ENCODE measurements at regions of chr13 and their contacts with region 1.

Region 1: GRCh38 chr13:30465585-30466357 is at the start of gene HMGB1:
- DNase-seq: peak; percentile 98 to 99 (median 99)
- ATAC-seq: peak; percentile 96 to 99 (median 98)
- H3K4me3 ChIP-seq: peak within 1 kb of the TSS; percentile 70 to 99 (median 94)
- H3K27ac ChIP-seq: peak within 1 kb of the TSS; percentile 98 to 100 (median 100)
- H3K4me1 ChIP-seq: peaks cover 2 to 39% (median 29%) of the 10 kb centered on the region in 12 donors
- H3K27me3 ChIP-seq: no peaks in the 10 kb centered on the region
- CTCF ChIP-seq: no peak
- POLR2A ChIP-seq: peak; percentile 94 to 98
- total RNA-seq, gene HMGB1: 137 to 215 (median 164) TPM

Region 2: DNA sequence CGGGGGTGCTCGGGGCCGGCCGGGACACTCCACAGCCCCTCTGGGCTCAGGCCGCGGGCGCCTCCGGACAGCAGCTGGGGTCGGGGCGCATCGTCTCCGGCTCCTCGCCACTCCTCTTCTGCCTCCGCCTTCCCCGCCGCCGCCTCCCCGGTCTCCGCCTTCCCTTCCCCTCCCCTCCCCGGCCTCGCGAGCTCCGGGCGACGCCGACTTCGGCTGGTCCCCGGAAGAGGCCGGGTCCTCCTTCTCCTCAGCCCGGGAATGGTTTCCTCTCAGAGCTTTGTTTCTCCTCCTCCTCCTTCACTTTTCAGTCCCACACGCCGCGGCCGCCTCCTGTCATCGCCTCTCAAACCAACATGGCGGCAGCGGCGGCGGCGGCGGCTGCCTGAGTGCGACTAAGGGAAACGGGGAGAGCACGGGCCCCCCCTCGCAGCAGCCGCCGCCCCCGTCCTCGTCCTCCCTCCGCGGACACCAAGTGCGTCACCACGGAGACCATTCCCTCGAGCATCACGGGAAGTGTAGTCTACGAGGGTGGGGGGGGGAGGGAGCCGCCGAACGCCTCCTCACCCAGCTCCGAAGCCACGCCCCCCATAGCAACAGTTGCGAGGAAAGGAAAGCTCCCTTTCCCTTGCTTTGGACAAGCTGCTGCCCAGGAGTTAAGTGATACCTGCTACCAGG is 615.4 kb before region 1 on chr13 and contains the start of gene UBL3:
- intact Hi-C with region 1: loop called in 1 of 10 experiments (anchors 5 kb)
- DNase-seq: peak; percentile 97
- ATAC-seq: peak; percentile 96 to 98 (median 98)
- H3K4me3 ChIP-seq: peak within 1 kb of the TSS; percentile 64 to 96 (median 89)
- H3K27ac ChIP-seq: peak within 1 kb of the TSS; percentile 96 to 99 (median 98)
- H3K4me1 ChIP-seq: peaks cover 0 to 29% (median 19%) of the 10 kb centered on the region in 12 donors
- H3K27me3 ChIP-seq: no peaks in the 10 kb centered on the region
- CTCF ChIP-seq: no peak
- POLR2A ChIP-seq: peak in 1 of 2 donors; percentile 77
- total RNA-seq, gene UBL3: 19.0 to 27.7 (median 21.2) TPM

Region 3: GRCh38 chr13:30306762-30307193 is 159.0 kb before region 1 on chr13:
- intact Hi-C with region 1: loop called in 2 of 10 experiments (anchors 5 kb)
- DNase-seq: peak; percentile 95 to 96 (median 96)
- ATAC-seq: peak; percentile 93 to 97 (median 96)
- H3K4me3 ChIP-seq: peak overlapping the region; percentile 80 to 100 (median 96)
- H3K27ac ChIP-seq: peak overlapping the region; percentile 87 to 98 (median 96)
- H3K4me1 ChIP-seq: peaks cover 3 to 56% (median 28%) of the 10 kb centered on the region in 12 donors
- H3K27me3 ChIP-seq: no peaks in the 10 kb centered on the region
- CTCF ChIP-seq: no peak
- POLR2A ChIP-seq: no peak

Region 4: DNA sequence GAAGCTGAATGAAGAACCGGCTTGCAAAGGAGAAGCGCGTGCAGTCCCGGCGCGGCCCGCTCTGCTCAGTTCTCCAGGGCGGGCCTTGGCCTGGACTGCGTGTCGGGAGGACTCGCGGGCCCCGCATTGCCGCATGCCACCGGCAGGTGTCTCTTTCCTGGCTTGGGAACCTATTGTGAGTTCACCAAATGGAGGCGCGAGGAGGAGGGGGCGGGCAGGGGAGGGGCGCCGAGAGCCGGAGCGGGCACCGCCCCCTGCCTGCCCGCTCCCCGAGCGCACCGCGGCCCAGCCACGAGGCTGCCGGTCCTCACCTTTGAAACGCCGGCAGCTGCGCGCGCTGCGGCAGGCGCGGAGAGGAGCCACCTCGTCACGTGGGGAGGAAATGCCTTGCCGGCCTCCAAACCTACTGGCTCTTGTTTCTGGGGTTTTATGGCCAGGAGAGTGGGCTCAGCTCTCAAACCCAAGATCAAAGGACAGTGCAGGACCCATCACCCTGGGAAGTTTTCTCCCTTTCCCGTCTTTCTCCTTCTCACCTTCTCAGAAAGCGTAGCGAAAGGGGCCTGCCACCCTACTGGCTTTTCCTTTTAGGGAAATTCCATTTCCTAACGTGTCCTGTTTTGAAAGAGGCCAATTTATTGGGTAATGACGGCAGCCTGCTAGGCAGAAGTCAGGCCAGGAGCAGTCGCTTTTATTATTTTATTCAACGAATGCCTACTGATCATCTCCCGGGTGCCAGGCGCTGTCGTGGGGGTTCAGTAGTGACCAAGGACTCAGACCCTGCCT is 57.3 kb before region 1 on chr13:
- intact Hi-C with region 1: loop called in 6 of 10 experiments (anchors 1 to 5 kb)
- DNase-seq: peak; percentile 92 to 97 (median 95)
- ATAC-seq: peak; percentile 93 to 98 (median 97)
- H3K4me3 ChIP-seq: peak overlapping the region in 11 of 12 donors; percentile 12 to 60 (median 49)
- H3K27ac ChIP-seq: peak overlapping the region; percentile 55 to 92 (median 80)
- H3K4me1 ChIP-seq: peaks cover 0 to 22% (median 8%) of the 10 kb centered on the region in 12 donors
- H3K27me3 ChIP-seq: no peaks in the 10 kb centered on the region
- CTCF ChIP-seq: peak; percentile 73 to 96 (median 81)
- POLR2A ChIP-seq: no peak

Region 5: DNA sequence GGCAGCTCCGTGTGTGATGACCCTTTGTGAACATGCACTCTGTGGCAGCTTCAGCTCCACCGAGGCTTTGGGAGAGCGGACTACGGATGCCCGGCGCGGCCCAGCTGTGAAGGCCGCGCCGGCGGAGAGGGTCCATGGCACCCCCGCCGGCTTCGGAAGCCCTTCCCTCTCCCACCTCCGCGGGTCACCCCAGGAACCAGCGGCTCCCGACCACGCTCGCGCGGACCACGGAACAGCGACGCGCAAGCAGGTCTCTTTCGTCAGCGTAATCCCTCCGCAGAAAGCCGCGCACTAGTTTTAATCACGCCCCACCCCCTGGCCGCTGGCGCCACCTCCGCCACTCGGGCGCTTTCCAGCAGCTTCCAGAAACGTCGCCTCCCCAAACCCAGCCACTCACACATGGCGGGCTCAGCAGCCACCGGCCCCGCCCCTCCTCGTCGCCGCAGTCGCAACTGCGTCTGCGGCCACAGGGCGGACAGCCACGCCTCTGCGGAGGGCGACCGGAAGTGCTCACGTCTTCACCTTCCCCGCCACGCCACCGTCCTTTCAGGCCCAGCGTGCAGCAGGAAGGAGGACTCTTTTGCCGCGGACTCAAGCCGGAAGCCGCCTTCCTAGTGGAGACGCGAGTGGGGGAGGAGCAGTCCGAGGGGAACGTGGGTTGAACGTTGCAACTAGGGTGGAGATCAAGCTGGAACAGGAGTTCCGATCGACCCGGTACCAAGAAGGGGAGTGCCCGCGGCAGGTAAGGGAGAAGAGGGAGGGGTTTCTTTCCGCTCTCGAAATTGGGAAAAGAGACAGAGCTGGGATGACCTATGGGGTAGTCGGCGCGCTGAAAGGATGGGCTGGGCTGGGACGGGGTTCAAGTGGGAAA is 151.8 kb after region 1 on chr13 and contains the start of gene USPL1:
- intact Hi-C with region 1: loop called in 9 of 10 experiments (anchors 1 to 10 kb)
- DNase-seq: peak; percentile 99
- ATAC-seq: peak; percentile 95 to 98 (median 96)
- H3K4me3 ChIP-seq: peak within 1 kb of the TSS; percentile 61 to 89 (median 84)
- H3K27ac ChIP-seq: peak within 1 kb of the TSS; percentile 98 to 100 (median 99)
- H3K4me1 ChIP-seq: peaks cover 0 to 42% (median 25%) of the 10 kb centered on the region in 12 donors
- H3K27me3 ChIP-seq: no peaks in the 10 kb centered on the region
- CTCF ChIP-seq: peak in 11 of 12 donors; percentile 14 to 48 (median 32)
- POLR2A ChIP-seq: peak; percentile 40 to 92
- total RNA-seq, gene USPL1: 9.0 to 14.3 (median 10.2) TPM

Region 6: DNA sequence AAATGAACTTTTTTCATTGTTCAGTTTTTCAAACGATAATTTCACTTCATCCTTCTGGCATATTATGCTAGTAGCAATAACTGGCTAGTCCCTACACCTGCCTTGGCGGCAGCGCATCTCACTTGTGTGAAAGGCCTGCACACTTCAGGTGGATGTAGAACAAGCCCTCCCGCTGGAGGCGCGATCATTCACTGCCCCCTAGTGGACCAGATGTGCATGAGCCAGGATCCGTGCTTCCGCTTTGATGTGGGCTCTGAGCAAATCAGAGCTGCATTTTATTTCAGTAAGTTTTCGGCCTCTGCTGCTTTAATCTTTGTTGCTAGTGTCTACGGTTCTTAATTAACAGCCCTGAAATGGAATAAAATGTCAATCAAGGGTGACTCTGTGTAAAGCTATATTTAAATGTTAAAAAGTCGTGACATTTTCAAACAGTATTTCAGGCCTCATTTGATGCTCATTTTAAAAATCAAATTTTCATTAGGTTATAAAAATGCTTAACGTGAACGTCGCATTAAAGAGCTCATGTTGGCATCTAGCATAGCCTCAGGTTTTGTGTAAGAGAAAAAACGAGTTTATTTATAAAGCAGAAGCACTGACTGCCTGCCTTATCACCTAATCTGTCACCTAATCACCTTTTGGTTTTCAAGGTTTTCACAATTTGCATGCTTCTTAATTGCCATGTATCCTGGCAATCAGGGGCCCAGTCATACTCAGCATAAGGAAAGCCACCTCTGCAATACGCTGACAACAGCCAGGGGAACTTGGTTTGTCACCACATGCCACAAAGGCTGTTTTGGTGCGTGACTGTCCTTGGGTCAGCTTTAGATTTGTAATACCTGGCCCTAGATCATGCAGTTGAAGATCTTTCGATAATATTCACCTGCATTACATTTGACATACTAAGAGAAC is 578.9 kb after region 1 on chr13:
- intact Hi-C with region 1: loop called in 1 of 10 experiments (anchors 10 kb)
- DNase-seq: peak; percentile 66 to 88 (median 75)
- ATAC-seq: peak; percentile 81 to 92 (median 84)
- H3K4me3 ChIP-seq: no peak overlapping the region
- H3K27ac ChIP-seq: peak overlapping the region in 2 of 12 donors; percentile 59 to 82
- H3K4me1 ChIP-seq: peaks cover 0 to 32% (median 10%) of the 10 kb centered on the region in 12 donors
- H3K27me3 ChIP-seq: peaks cover 0 to 18% (median 0%) of the 10 kb centered on the region in 9 donors
- CTCF ChIP-seq: peak; percentile 91 to 98 (median 95)
- POLR2A ChIP-seq: no peak